Naive thymus-derived CD4-positive, alpha-beta T cell (primary cell): ENCODE measurements at regions of chr3 and their contacts with region 1.

Region 1: GRCh38 chr3:59450946-59451763 is 401.3 kb upstream of the CFAP20DC start:
- DNase-seq: peak in 8 of 9 donors; percentile 58 to 93 (median 86)
- ATAC-seq: peak; percentile 95
- H3K4me3 ChIP-seq: peak overlapping the region; percentile 30
- H3K4me3 Mint-ChIP-seq: peak overlapping the region; percentile 59 to 83 (median 77)
- H3K27ac ChIP-seq: peak overlapping the region; percentile 76
- H3K27ac Mint-ChIP-seq: peak overlapping the region; percentile 90 to 100 (median 97)
- H3K4me1 ChIP-seq: peaks cover 45 to 72% of the 10 kb centered on the region in 2 donors
- H3K4me1 Mint-ChIP-seq: peaks cover 52 to 94% (median 79%) of the 10 kb centered on the region in 7 donors
- H3K27me3 ChIP-seq: no peaks in the 10 kb centered on the region
- H3K27me3 Mint-ChIP-seq: no peaks in the 10 kb centered on the region

Region 2: DNA sequence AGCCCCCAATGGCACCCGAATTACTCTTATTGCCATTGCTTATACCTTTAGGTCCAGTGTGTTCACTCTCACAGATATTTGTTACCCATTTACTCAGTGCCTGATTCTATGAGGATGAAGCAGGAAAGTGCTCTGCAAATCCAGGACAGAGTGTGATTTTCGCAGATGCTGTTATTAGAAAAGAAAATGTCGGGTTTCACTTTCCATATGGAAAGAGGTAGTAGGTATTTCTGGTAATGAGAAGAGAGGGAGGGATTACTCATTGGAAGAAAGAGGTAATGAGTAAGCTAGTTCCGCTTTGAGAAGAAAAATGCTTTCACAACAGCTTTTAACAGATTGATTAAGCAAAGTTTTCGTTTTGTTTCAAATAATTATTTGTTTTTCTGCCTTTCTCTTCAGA is 65.0 kb before region 1 on chr3:
- CTCF ChIA-PET with region 1: no interaction called
- POLR2A ChIA-PET with region 1: no interaction called
- intact Hi-C with region 1: loop called in 1 of 2 experiments (anchors 1 kb)
- DNase-seq: no peak
- ATAC-seq: peak; percentile 60
- H3K4me3 ChIP-seq: no peak overlapping the region
- H3K4me3 Mint-ChIP-seq: peak overlapping the region in 2 of 10 donors; percentile 4 to 58
- H3K27ac ChIP-seq: no peak overlapping the region
- H3K27ac Mint-ChIP-seq: peak overlapping the region in 1 of 9 donors; percentile 88
- H3K4me1 ChIP-seq: no peaks in the 10 kb centered on the region
- H3K4me1 Mint-ChIP-seq: peaks cover 3 to 80% (median 38%) of the 10 kb centered on the region in 7 donors
- H3K27me3 ChIP-seq: no peaks in the 10 kb centered on the region
- H3K27me3 Mint-ChIP-seq: no peaks in the 10 kb centered on the region

Region 3: GRCh38 chr3:59424268-59425010 is 26.7 kb before region 1 on chr3:
- CTCF ChIA-PET with region 1: interaction called, 5 read pairs
- POLR2A ChIA-PET with region 1: interaction called, 9 read pairs
- intact Hi-C with region 1: loop called (anchors 1 kb)
- DNase-seq: peak in 5 of 9 donors; percentile 20 to 72 (median 50)
- ATAC-seq: peak; percentile 76
- H3K4me3 ChIP-seq: no peak overlapping the region
- H3K4me3 Mint-ChIP-seq: peak overlapping the region; percentile 25 to 63 (median 34)
- H3K27ac ChIP-seq: no peak overlapping the region
- H3K27ac Mint-ChIP-seq: peak overlapping the region; percentile 44 to 92 (median 76)
- H3K4me1 ChIP-seq: peaks cover 46 to 50% of the 10 kb centered on the region in 2 donors
- H3K4me1 Mint-ChIP-seq: peaks cover 36 to 59% (median 52%) of the 10 kb centered on the region in 7 donors
- H3K27me3 ChIP-seq: no peaks in the 10 kb centered on the region
- H3K27me3 Mint-ChIP-seq: no peaks in the 10 kb centered on the region

Region 4: DNA sequence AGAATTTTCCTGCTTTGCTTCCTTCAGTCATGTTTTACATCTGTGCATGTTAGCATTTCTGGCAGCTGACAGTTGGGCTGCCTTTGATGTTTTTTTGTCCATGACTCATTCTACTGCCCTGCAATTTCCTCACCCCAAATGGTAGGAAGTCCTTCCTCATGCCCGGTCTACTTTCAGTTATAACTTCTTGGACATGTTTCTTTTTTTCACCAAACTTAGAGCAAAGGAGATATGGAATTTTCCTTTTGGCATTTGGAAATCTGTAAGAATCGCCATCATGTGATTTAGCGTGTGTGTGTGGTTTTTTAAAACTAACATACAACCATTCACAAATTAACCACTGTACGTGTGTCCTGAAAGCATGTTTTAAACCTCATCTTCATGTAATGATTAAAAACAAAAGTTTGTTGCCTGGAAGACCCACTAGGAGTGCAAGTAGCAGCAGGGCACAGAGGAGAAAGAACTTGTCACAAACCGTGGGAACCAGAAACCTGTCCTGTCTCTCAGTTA is 29.4 kb after region 1 on chr3:
- CTCF ChIA-PET with region 1: no interaction called
- POLR2A ChIA-PET with region 1: interaction called, 3 read pairs
- intact Hi-C with region 1: loop called (anchors 1 to 2 kb)
- DNase-seq: no peak
- ATAC-seq: no peak
- H3K4me3 ChIP-seq: no peak overlapping the region
- H3K4me3 Mint-ChIP-seq: peak overlapping the region in 1 of 10 donors; percentile 61
- H3K27ac ChIP-seq: no peak overlapping the region
- H3K27ac Mint-ChIP-seq: peak overlapping the region in 2 of 9 donors; percentile 28 to 78
- H3K4me1 ChIP-seq: no peaks in the 10 kb centered on the region
- H3K4me1 Mint-ChIP-seq: peaks cover 6 to 23% (median 12%) of the 10 kb centered on the region in 7 donors
- H3K27me3 ChIP-seq: no peaks in the 10 kb centered on the region
- H3K27me3 Mint-ChIP-seq: no peaks in the 10 kb centered on the region

Region 5: GRCh38 chr3:60053526-60054265 is 602.5 kb after region 1 on chr3:
- CTCF ChIA-PET with region 1: no interaction called
- POLR2A ChIA-PET with region 1: no interaction called
- intact Hi-C with region 1: loop called in 1 of 2 experiments (anchors 10 kb)
- DNase-seq: peak in 1 of 9 donors; percentile 55
- ATAC-seq: no peak
- H3K4me3 ChIP-seq: no peak overlapping the region
- H3K4me3 Mint-ChIP-seq: peak overlapping the region; percentile 7 to 78 (median 51)
- H3K27ac ChIP-seq: peak overlapping the region; percentile 5
- H3K27ac Mint-ChIP-seq: peak overlapping the region; percentile 77 to 99 (median 90)
- H3K4me1 ChIP-seq: peaks cover 3 to 73% of the 10 kb centered on the region in 2 donors
- H3K4me1 Mint-ChIP-seq: peaks cover 36 to 95% (median 92%) of the 10 kb centered on the region in 7 donors
- H3K27me3 ChIP-seq: no peaks in the 10 kb centered on the region
- H3K27me3 Mint-ChIP-seq: no peaks in the 10 kb centered on the region